B cell (primary cell): ENCODE measurements at regions of chr11 and their contacts with region 1.

Region 1: GRCh38 chr11:2532704-2533586 is 88.1 kb downstream of the KCNQ1 start:
- DNase-seq: peak; percentile 93
- ATAC-seq: peak; percentile 89
- H3K4me3 ChIP-seq: peak overlapping the region in 2 of 5 experiments; percentile 9 to 19
- H3K4me3 Mint-ChIP-seq: peak overlapping the region; percentile 85
- H3K27ac ChIP-seq: no peak overlapping the region
- H3K27ac Mint-ChIP-seq: no peak overlapping the region
- H3K4me1 ChIP-seq: peaks cover 19 to 23% of the 10 kb centered on the region in 2 donors
- H3K4me1 Mint-ChIP-seq: peaks cover 22% of the 10 kb centered on the region
- H3K27me3 ChIP-seq: peaks cover 0 to 14% (median 0%) of the 10 kb centered on the region in 4 experiments
- H3K27me3 Mint-ChIP-seq: no peaks in the 10 kb centered on the region
- CTCF ChIP-seq: peak; percentile 99

Region 2: GRCh38 chr11:2305140-2305840 is 227.7 kb before region 1 on chr11:
- CTCF ChIA-PET with region 1: interaction called, 17 read pairs
- POLR2A ChIA-PET with region 1: no interaction called
- intact Hi-C with region 1: loop called (anchors 5 kb)
- DNase-seq: peak; percentile 85
- ATAC-seq: peak; percentile 56
- H3K4me3 ChIP-seq: no peak overlapping the region
- H3K4me3 Mint-ChIP-seq: peak overlapping the region; percentile 59
- H3K27ac ChIP-seq: peak overlapping the region in 1 of 2 donors; percentile 40
- H3K27ac Mint-ChIP-seq: peak overlapping the region; percentile 67
- H3K4me1 ChIP-seq: peaks cover 59 to 62% of the 10 kb centered on the region in 2 donors
- H3K4me1 Mint-ChIP-seq: peaks cover 51% of the 10 kb centered on the region
- H3K27me3 ChIP-seq: no peaks in the 10 kb centered on the region
- H3K27me3 Mint-ChIP-seq: no peaks in the 10 kb centered on the region
- CTCF ChIP-seq: peak; percentile 93

Region 3: DNA sequence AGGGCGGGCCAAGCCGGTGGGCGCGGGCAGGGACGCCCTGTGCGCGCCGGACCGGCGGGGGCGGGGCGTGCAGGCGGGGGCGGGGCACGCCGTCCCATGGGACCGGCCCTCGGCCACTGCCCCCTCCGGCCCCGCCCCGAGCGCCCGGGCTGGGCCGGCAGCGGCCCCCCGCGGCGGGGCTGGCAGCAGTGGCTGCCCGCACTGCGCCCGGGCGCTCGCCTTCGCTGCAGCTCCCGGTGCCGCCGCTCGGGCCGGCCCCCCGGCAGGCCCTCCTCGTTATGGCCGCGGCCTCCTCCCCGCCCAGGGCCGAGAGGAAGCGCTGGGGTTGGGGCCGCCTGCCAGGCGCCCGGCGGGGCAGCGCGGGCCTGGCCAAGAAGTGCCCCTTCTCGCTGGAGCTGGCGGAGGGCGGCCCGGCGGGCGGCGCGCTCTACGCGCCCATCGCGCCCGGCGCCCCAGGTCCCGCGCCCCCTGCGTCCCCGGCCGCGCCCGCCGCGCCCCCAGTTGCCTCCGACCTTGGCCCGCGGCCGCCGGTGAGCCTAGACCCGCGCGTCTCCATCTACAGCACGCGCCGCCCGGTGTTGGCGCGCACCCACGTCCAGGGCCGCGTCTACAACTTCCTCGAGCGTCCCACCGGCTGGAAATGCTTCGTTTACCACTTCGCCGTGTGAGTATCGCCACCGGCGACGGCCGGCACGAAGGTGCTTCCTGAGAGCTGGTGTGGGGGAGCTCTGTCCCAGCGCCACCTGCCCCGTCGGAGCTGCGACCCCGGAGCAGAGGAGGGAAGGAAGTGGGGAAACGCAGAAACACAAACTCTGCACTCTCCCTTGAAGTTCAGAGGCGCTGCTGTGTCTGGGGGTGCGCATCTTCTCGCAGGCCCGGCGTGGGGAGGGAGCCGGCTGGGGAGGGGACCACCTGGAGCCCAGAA is 87.9 kb before region 1 on chr11 and contains the start of gene KCNQ1:
- CTCF ChIA-PET with region 1: interaction called, 25 read pairs
- POLR2A ChIA-PET with region 1: no interaction called
- intact Hi-C with region 1: no loop called
- DNase-seq: peak; percentile 76
- ATAC-seq: peak; percentile 82
- H3K4me3 ChIP-seq: peak within 1 kb of the TSS; percentile 32 to 76 (median 64)
- H3K4me3 Mint-ChIP-seq: peak within 1 kb of the TSS; percentile 93
- H3K27ac ChIP-seq: no peak within 1 kb of the TSS
- H3K27ac Mint-ChIP-seq: peak within 1 kb of the TSS; percentile 87
- H3K4me1 ChIP-seq: peaks cover 33 to 41% of the 10 kb centered on the region in 2 donors
- H3K4me1 Mint-ChIP-seq: peaks cover 31% of the 10 kb centered on the region
- H3K27me3 ChIP-seq: peaks cover 0 to 10% (median 0%) of the 10 kb centered on the region in 4 experiments
- H3K27me3 Mint-ChIP-seq: no peaks in the 10 kb centered on the region
- CTCF ChIP-seq: no peak
- total RNA-seq, gene KCNQ1: 28.8 and 31.9 TPM in 2 replicates

Region 4: DNA sequence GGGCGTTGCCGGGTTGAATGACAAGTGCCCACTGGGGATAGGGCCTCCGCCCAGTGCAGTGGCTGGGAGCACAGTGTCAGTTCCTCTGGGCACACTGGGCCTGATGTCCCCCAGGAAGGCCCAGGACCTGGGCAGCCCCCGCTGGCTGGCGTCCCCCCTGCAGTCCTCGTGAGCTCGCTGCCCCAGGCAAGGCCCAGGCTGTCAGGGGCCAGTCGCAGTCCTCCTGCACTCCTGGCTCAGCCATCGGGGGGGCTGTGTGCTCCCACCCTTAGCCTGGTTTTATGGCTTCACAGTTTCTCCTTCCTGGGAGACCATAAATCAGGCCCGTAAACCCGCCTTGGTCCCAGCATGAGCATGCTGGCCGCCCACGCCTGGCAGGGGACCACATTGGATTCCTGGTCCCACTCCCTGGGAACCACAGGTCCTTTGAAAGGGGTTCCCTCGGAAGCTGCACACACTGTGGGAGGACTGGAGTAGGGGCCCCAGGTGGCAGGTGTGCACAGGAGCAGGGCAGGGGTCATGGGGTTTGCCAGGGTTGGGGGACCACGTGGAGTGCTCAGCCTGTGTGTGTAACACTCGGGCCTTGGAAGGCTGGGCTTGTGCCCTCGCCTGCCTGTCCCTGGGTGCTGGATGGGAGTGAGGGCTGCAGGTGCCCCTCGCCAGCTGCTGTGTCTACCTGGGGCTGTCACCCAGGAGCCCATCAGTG is 53.3 kb after region 1 on chr11:
- CTCF ChIA-PET with region 1: no interaction called
- POLR2A ChIA-PET with region 1: no interaction called
- intact Hi-C with region 1: no loop called
- DNase-seq: no peak
- ATAC-seq: no peak
- H3K4me3 ChIP-seq: no peak overlapping the region
- H3K4me3 Mint-ChIP-seq: no peak overlapping the region
- H3K27ac ChIP-seq: no peak overlapping the region
- H3K27ac Mint-ChIP-seq: no peak overlapping the region
- H3K4me1 ChIP-seq: no peaks in the 10 kb centered on the region
- H3K4me1 Mint-ChIP-seq: no peaks in the 10 kb centered on the region
- H3K27me3 ChIP-seq: no peaks in the 10 kb centered on the region
- H3K27me3 Mint-ChIP-seq: no peaks in the 10 kb centered on the region
- CTCF ChIP-seq: no peak

Region 5: GRCh38 chr11:2892215-2893020 is 359.5 kb after region 1 on chr11:
- CTCF ChIA-PET with region 1: interaction called, 595 read pairs
- POLR2A ChIA-PET with region 1: interaction called, 16 read pairs
- intact Hi-C with region 1: loop called (anchors 1 kb)
- DNase-seq: peak; percentile 74
- ATAC-seq: peak; percentile 69
- H3K4me3 ChIP-seq: peak overlapping the region in 4 of 5 experiments; percentile 33 to 62 (median 50)
- H3K4me3 Mint-ChIP-seq: peak overlapping the region; percentile 75
- H3K27ac ChIP-seq: no peak overlapping the region
- H3K27ac Mint-ChIP-seq: no peak overlapping the region
- H3K4me1 ChIP-seq: peaks cover 15 to 21% of the 10 kb centered on the region in 2 donors
- H3K4me1 Mint-ChIP-seq: peaks cover 17% of the 10 kb centered on the region
- H3K27me3 ChIP-seq: peaks cover 0 to 7% (median 0%) of the 10 kb centered on the region in 4 experiments
- H3K27me3 Mint-ChIP-seq: no peaks in the 10 kb centered on the region
- CTCF ChIP-seq: peak; percentile 88

Region 6: GRCh38 chr11:2992234-2992996 is 459.5 kb after region 1 on chr11 and contains the start of gene NAP1L4:
- CTCF ChIA-PET with region 1: interaction called, 3 read pairs
- POLR2A ChIA-PET with region 1: no interaction called
- intact Hi-C with region 1: loop called (anchors 2 kb)
- DNase-seq: peak; percentile 98
- ATAC-seq: peak; percentile 88
- H3K4me3 ChIP-seq: peak within 1 kb of the TSS; percentile 71 to 97 (median 88)
- H3K4me3 Mint-ChIP-seq: peak within 1 kb of the TSS; percentile 96
- H3K27ac ChIP-seq: peak within 1 kb of the TSS; percentile 71 to 87
- H3K27ac Mint-ChIP-seq: peak within 1 kb of the TSS; percentile 99
- H3K4me1 ChIP-seq: peaks cover 40 to 45% of the 10 kb centered on the region in 2 donors
- H3K4me1 Mint-ChIP-seq: peaks cover 43% of the 10 kb centered on the region
- H3K27me3 ChIP-seq: no peaks in the 10 kb centered on the region
- H3K27me3 Mint-ChIP-seq: no peaks in the 10 kb centered on the region
- CTCF ChIP-seq: no peak
- total RNA-seq, gene NAP1L4: 133 and 159 TPM in 2 replicates